Activated CD8-positive, alpha-beta memory T cell treated with anti-CD3 and anti-CD28 coated beads, Interleukin-2, amount 10 ng/mL, durations not matched to agents 7 days and 5 days (primary cell): ENCODE measurements at regions of chr4 and their contacts with region 1.

Region 1: DNA sequence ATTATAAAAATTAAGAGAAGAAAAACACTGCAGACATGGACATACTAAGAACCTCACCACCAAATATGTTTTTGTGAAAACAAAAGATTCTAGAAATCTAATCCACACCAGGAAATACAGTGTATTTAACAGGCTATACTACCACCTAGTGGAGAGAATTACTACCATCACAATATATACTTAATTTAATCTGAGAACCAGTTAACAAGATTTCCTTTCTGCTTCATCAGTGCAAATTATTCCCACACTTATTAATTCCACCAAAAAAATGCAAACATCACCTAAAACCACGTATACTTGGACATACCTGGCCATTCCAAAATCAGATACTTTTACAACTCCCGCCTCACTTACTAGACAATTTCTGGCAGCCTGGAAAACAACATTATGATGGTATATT is 7.0 kb upstream of the TXK start:
- DNase-seq: no peak
- ATAC-seq: peak; percentile 35
- H3K4me3 Mint-ChIP-seq: no peak overlapping the region
- H3K27ac Mint-ChIP-seq: no peak overlapping the region
- H3K4me1 Mint-ChIP-seq: peaks cover 49% of the 10 kb centered on the region
- H3K27me3 Mint-ChIP-seq: no peaks in the 10 kb centered on the region

Region 2: DNA sequence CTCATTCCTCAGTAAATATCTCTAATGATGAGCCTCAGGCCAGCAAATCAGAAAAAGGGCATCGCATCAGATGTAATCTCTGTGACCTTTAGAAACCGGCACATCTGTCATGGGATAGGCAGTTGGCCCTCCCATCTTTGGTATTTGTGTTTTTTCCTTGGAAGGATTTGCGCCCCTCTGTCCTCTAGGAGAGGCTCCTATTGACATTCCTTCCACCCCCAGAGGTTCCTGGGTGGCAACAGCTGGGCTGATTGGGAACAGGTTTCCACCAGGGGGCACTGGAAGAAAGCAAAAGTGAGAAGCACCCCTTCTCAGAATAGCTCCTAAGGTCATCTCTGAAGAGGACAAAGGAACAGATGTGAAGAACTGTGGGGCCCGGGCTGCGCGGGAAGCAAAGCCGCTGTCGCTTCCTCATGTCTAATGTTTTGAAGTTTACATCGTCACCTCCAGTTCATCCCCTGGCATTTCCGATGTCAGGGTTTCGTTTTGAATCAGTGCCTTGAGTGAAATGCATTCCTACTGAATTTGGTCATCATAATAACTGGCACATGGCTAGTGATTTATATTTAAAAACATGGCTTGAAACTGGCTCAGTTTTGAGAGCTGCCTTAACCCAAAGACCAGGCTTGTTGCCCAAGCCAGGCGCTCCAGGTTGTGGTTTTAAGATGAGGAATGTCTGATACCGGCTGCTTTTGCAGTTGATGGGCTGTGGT is 13.2 kb before region 1 on chr4:
- CTCF ChIA-PET with region 1: interaction called, 156 read pairs
- DNase-seq: peak; percentile 92
- ATAC-seq: peak; percentile 83
- H3K4me3 Mint-ChIP-seq: peak overlapping the region; percentile 39
- H3K27ac Mint-ChIP-seq: peak overlapping the region; percentile 94
- H3K4me1 Mint-ChIP-seq: peaks cover 75% of the 10 kb centered on the region
- H3K27me3 Mint-ChIP-seq: no peaks in the 10 kb centered on the region

Region 3: GRCh38 chr4:48262926-48263325 is 121.9 kb after region 1 on chr4:
- CTCF ChIA-PET with region 1: no interaction called
- DNase-seq: no peak
- ATAC-seq: no peak
- H3K4me3 Mint-ChIP-seq: no peak overlapping the region
- H3K27ac Mint-ChIP-seq: no peak overlapping the region
- H3K4me1 Mint-ChIP-seq: peaks cover 9% of the 10 kb centered on the region
- H3K27me3 Mint-ChIP-seq: no peaks in the 10 kb centered on the region